GM10248 (cell line): ENCODE measurements at regions of chr18 and their contacts with region 1.

Region 1: GRCh38 chr18:50830544-50830943 is 10.7 kb upstream of the MRO start:
- DNase-seq: peak; percentile 48
- CTCF ChIP-seq: no peak

Region 2: GRCh38 chr18:50707855-50708469 is 122.6 kb before region 1 on chr18:
- CTCF ChIA-PET with region 1: no interaction called
- POLR2A ChIA-PET with region 1: no interaction called
- DNase-seq: no peak
- CTCF ChIP-seq: no peak

Region 3: DNA sequence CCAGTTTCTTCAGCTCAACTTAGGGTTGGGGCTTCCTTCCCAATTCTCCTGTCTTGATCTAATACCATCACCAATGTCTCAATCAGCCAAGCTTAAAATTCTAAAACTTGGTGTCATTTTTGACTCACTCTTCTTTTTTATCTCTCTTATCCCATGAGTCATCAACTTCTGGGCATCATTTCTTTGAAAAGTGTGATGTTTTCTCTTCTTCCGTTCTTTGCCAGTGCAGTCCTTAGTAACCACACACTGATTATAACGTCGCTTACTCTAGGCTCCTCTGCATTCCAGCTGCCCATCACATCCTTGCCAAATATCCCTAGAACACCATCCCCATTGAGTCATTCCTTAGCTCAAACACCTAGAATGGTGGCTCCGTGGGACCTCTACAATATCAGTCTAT is 16.6 kb after region 1 on chr18:
- CTCF ChIA-PET with region 1: interaction called, 12 read pairs
- POLR2A ChIA-PET with region 1: no interaction called
- DNase-seq: no peak
- CTCF ChIP-seq: no peak